ENCODE measurements at regions of chr1 and their contacts with region 1.

Region 1: GRCh38 chr1:107750358-107750959 is 214.5 kb downstream of the VAV3 start:
- DNase-seq: peak; percentile 76
- ATAC-seq: no peak
- H3K4me3 Mint-ChIP-seq: no peak overlapping the region
- H3K27ac Mint-ChIP-seq: no peak overlapping the region
- H3K4me1 Mint-ChIP-seq: no peaks in the 10 kb centered on the region
- H3K27me3 Mint-ChIP-seq: no peaks in the 10 kb centered on the region

Region 2: DNA sequence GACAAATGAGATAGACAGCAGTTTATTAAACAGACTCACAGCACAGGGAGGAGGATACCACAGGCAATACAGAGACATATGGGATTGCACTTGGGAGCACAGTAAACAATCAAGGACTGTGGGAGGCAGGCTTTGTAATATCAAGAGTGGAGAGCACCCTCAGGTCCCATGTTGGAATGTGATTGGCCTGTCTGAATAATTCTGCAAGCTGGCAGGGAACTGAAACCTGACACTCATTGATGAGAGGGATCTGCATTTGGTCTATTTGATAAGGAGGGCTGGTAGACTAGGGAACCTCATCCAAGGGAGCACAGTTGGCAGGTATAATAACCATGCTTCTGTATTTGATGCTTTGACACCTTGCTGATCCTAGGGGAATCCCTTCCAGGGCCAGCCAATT is 763.9 kb before region 1 on chr1:
- CTCF ChIA-PET with region 1: no interaction called
- POLR2A ChIA-PET with region 1: no interaction called
- intact Hi-C with region 1: no loop called
- DNase-seq: no peak
- ATAC-seq: no peak
- H3K4me3 Mint-ChIP-seq: no peak overlapping the region
- H3K27ac Mint-ChIP-seq: no peak overlapping the region
- H3K4me1 Mint-ChIP-seq: no peaks in the 10 kb centered on the region
- H3K27me3 Mint-ChIP-seq: peaks cover 15% of the 10 kb centered on the region

Region 3: GRCh38 chr1:107196973-107197562 is 553.4 kb before region 1 on chr1:
- CTCF ChIA-PET with region 1: no interaction called
- POLR2A ChIA-PET with region 1: no interaction called
- intact Hi-C with region 1: loop called in 1 of 2 experiments (anchors 1 kb)
- DNase-seq: peak; percentile 46
- ATAC-seq: no peak
- H3K4me3 Mint-ChIP-seq: no peak overlapping the region
- H3K27ac Mint-ChIP-seq: no peak overlapping the region
- H3K4me1 Mint-ChIP-seq: no peaks in the 10 kb centered on the region
- H3K27me3 Mint-ChIP-seq: peaks cover 3% of the 10 kb centered on the region

Region 4: DNA sequence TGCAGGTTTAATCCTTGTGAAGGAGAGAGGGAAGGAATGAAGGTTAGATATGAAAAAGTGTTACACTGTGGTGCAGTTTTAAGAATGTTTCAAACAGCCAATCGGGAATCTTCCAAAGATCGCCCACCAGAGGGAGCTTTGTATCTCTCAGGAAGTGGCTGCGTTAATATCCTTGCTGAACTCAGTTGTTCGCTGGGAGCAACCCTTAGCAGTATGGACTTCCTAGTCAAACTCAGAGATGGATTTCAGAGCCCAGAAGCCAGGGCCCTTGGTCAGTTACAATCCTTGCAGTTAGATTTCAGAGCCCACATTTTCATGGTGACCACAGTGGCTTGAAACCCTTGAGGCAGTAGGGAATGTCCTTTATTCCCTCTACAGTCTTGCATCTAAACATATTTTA is 473.4 kb before region 1 on chr1:
- CTCF ChIA-PET with region 1: no interaction called
- POLR2A ChIA-PET with region 1: no interaction called
- intact Hi-C with region 1: loop called in 1 of 2 experiments (anchors 2 kb)
- DNase-seq: peak; percentile 11
- ATAC-seq: no peak
- H3K4me3 Mint-ChIP-seq: no peak overlapping the region
- H3K27ac Mint-ChIP-seq: no peak overlapping the region
- H3K4me1 Mint-ChIP-seq: peaks cover 6% of the 10 kb centered on the region
- H3K27me3 Mint-ChIP-seq: peaks cover 3% of the 10 kb centered on the region

Region 5: DNA sequence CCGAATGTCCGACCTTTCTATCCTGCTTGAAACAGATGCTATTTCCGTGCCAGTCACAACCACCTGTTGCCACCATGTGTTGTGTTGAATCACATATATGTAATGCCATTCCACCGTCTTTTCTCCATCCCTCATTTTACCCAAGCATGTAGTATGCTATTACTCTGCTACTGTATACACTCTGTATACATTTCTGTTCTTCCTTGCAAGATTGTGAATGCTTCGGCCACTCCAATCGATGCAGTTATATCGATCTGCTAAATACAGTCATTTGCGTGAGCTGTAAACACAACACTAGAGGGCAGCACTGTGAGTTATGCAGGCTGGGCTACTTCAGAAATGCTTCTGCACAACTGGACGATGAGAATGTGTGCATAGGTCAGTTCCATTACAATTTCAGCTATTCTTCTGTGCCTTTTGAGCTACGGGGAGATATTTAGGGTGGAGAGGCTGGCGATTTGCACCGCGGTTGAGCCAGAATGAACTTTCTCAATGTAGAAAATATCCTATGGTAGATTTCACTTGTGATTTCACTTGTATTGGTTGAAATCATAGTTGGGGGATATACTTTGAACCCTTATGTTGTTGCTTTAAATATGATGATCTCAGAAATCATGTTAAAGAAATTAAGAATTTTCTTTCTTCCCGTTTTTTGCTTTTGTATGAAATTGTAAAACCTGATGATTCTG is 319.8 kb before region 1 on chr1:
- CTCF ChIA-PET with region 1: interaction called, 8 read pairs
- POLR2A ChIA-PET with region 1: no interaction called
- intact Hi-C with region 1: loop called (anchors 1 to 2 kb)
- DNase-seq: peak; percentile 48
- ATAC-seq: no peak
- H3K4me3 Mint-ChIP-seq: no peak overlapping the region
- H3K27ac Mint-ChIP-seq: no peak overlapping the region
- H3K4me1 Mint-ChIP-seq: no peaks in the 10 kb centered on the region
- H3K27me3 Mint-ChIP-seq: peaks cover 5% of the 10 kb centered on the region

Region 6: GRCh38 chr1:107547363-107548155 is 202.9 kb before region 1 on chr1:
- CTCF ChIA-PET with region 1: no interaction called
- POLR2A ChIA-PET with region 1: no interaction called
- intact Hi-C with region 1: loop called in 1 of 2 experiments (anchors 10 kb)
- DNase-seq: no peak
- ATAC-seq: no peak
- H3K4me3 Mint-ChIP-seq: no peak overlapping the region
- H3K27ac Mint-ChIP-seq: no peak overlapping the region
- H3K4me1 Mint-ChIP-seq: no peaks in the 10 kb centered on the region
- H3K27me3 Mint-ChIP-seq: no peaks in the 10 kb centered on the region

Region 7: DNA sequence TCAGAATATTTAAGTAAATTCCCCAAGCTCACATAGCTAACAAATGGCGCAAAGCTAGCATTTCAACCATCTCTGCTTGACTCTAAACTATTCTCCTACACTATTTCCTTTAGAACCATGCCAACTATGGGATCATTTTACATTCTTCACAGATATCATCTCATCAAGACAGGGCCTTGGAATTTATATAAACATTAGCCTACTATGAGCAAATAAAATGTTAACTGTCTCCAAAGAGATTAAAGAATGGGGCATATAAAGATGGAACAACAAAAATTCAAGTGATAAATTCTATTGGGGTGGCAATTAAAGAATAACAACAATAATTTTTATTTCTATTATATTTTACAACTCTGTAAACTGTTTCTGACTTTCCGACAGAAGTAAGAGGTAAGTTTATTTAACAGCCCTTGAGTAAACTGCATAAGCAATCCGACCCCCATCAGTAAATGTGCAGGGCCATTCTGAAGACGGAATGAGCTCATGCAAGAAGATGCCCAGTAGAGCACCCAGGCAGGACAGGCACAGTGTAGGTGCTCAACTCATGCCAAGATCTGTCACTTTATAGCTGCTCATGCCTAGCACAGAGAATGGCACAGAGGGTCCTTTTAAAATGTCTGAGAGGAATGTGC is 47.4 kb before region 1 on chr1:
- CTCF ChIA-PET with region 1: no interaction called
- POLR2A ChIA-PET with region 1: no interaction called
- intact Hi-C with region 1: no loop called
- DNase-seq: no peak
- ATAC-seq: no peak
- H3K4me3 Mint-ChIP-seq: no peak overlapping the region
- H3K27ac Mint-ChIP-seq: no peak overlapping the region
- H3K4me1 Mint-ChIP-seq: no peaks in the 10 kb centered on the region
- H3K27me3 Mint-ChIP-seq: no peaks in the 10 kb centered on the region